Activated CD8-positive, alpha-beta memory T cell treated with anti-CD3 and anti-CD28 coated beads, Interleukin-2, amount 10 ng/mL, durations not matched to agents 7 days and 5 days (primary cell): ENCODE measurements at regions of chr13 and their contacts with region 1.

Region 1: GRCh38 chr13:49278211-49278610 is 30.5 kb downstream of the CDADC1 start:
- DNase-seq: no peak
- ATAC-seq: no peak
- H3K4me3 Mint-ChIP-seq: no peak overlapping the region
- H3K27ac Mint-ChIP-seq: no peak overlapping the region
- H3K4me1 Mint-ChIP-seq: no peaks in the 10 kb centered on the region
- H3K27me3 Mint-ChIP-seq: no peaks in the 10 kb centered on the region

Region 2: GRCh38 chr13:49240017-49240416 is 38.2 kb before region 1 on chr13:
- CTCF ChIA-PET with region 1: interaction called, 59 read pairs
- DNase-seq: peak; percentile 67
- ATAC-seq: peak; percentile 88
- H3K4me3 Mint-ChIP-seq: no peak overlapping the region
- H3K27ac Mint-ChIP-seq: no peak overlapping the region
- H3K4me1 Mint-ChIP-seq: peaks cover 2% of the 10 kb centered on the region
- H3K27me3 Mint-ChIP-seq: peaks cover 12% of the 10 kb centered on the region

Region 3: DNA sequence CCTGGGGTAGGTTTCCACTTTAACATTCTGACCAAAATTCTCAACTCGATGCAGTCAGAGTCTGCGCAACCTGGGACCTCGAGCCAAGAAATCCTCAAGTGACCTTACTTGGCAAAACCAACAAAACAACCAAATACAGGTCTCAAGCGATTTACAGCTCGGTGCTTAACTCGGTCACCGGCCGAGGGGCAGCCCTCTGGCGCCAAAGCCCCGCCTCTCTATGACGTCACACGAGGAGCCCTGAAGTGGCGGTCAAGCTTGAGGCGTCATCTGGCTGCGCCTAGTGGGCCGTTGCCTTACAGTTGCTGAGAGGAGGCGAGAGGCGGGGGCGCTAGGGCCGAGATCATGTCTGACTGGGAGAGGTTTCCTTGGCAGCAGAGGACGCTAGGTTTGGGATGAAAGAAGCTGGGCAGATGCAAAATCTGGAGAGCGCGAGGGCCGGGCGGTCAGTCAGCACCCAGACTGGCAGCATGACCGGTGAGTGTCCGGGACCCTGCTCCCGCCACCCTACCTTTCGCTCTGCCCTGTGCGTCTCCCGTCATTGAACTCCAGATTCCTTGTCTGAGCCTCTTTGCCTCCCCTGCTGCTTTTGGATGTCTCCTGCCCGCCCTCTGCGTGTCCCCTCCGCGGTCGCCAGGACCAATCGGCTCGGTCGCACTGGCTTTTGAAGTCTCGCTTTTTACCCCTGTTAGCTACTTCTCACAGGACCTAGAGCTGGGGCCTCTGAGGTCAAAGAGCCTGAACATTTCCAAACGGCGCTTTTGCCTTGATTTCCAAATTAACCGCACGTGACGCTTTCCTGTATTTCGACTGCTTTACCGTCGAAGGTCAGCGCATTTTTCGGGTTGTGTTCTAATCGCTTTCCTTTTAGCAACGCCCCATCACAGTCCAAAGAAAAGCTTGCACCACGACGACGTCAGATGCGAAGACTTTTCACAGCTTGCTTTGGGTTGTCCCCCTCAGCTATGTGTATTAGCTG is 30.3 kb before region 1 on chr13 and contains the start of gene CDADC1:
- CTCF ChIA-PET with region 1: interaction called, 21 read pairs
- DNase-seq: peak; percentile 98
- ATAC-seq: peak; percentile 96
- H3K4me3 Mint-ChIP-seq: peak within 1 kb of the TSS; percentile 96
- H3K27ac Mint-ChIP-seq: peak within 1 kb of the TSS; percentile 96
- H3K4me1 Mint-ChIP-seq: peaks cover 33% of the 10 kb centered on the region
- H3K27me3 Mint-ChIP-seq: peaks cover 17% of the 10 kb centered on the region
- total RNA-seq, gene CDADC1: 12.4 to 14.8 TPM

Region 4: DNA sequence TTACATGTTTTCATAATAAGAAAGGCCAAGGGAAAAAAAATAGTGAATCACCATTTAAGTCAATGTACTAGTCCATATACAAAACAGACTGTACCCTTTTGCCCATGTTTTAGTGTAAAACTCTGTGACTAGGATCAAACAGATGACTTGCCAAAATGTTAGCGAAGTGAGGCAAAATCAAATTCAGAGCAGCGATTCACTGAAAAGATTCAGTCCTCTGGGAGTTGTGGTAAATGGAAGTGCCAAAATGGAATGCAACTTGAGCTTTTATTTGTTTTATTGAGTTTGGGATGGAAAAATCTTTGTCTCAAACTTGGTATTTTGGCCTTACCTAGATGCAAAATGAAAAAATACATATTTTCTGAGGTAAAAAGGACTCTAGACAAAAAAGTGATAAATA is 21.4 kb before region 1 on chr13:
- CTCF ChIA-PET with region 1: interaction called, 15 read pairs
- DNase-seq: no peak
- ATAC-seq: no peak
- H3K4me3 Mint-ChIP-seq: peak overlapping the region; percentile 5
- H3K27ac Mint-ChIP-seq: no peak overlapping the region
- H3K4me1 Mint-ChIP-seq: peaks cover 41% of the 10 kb centered on the region
- H3K27me3 Mint-ChIP-seq: no peaks in the 10 kb centered on the region

Region 5: DNA sequence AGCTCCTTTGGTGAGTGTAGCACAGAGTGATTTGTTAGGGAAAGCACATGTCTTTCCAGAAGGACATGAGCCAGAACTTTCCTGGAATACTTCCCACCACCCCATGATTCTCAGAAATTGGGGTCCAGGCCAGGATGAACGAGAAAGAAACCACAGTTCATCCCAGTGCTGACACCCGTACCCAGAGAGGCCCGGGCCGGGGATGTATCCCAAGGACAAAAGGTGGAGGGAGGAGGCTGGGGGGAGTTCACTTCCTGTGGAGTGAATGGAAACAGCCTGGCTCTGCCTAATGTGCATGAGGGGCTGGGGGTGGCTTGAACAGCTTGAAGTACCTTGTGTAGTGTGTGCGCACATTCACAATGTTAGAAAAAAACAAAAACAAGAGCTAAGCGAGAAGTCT is 17.0 kb after region 1 on chr13:
- CTCF ChIA-PET with region 1: interaction called, 18 read pairs
- DNase-seq: no peak
- ATAC-seq: no peak
- H3K4me3 Mint-ChIP-seq: no peak overlapping the region
- H3K27ac Mint-ChIP-seq: no peak overlapping the region
- H3K4me1 Mint-ChIP-seq: peaks cover 12% of the 10 kb centered on the region
- H3K27me3 Mint-ChIP-seq: no peaks in the 10 kb centered on the region